ENCODE measurements at regions of chr7 and their contacts with region 1.

Region 1: DNA sequence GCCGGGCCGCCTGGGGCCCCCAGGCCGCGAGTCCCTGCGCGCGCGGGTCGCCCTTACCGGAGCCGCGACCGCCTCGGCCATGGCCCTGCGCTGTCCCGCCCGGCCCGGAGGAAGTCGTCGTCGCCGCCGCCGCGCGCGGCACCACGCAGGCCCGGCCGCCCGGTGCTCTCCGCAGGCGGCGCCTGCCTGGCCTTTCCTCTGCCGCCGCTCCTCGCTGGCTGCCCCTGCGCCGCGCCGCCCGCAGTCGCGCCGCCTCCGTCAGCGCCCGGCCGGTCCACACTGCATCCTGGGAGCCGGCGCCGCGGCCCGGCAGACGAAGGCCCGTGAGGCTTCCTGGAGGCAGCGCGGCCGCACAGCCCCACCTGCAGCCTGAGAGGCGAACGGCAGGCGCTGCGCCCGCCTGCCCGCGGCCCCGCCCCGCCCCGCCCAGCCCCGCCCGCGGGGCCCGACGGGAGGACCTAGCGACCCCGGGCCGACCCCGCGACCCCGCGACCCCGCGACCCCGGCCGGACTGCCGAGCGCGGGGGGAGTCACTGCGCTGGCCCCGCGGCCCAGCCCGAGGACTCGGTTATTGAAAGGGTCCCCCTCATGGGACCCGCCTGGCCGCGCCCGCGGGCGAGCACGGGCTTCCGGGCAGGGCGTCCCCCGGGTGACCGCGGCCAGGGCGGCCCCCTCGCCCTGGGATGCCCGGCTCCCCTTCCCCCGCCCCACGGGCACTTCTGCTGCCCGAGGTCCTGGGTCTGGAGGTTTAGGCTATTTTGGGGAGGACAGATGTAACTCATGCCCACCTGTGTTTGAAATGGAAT is at the start of gene ZNF746:
- DNase-seq: peak; percentile 96 to 97 (median 97)
- ATAC-seq: peak; percentile 91
- H3K4me3 ChIP-seq: peak within 1 kb of the TSS; percentile 78
- H3K27ac ChIP-seq: peak within 1 kb of the TSS; percentile 71
- H3K4me1 ChIP-seq: peaks cover 31 to 34% of the 10 kb centered on the region in 2 experiments
- H3K27me3 ChIP-seq: peaks cover 5 to 16% of the 10 kb centered on the region in 2 experiments; a peak in 3 of 5 replicates
- CTCF ChIP-seq: peak; percentile 57 to 97 (median 92); a peak in 5 of 6 replicates
- EP300 ChIP-seq: peak; percentile 42; the same call in 1 of the 2 replicates
- POLR2A ChIP-seq: no peak
- RAD21 ChIP-seq: peak; percentile 77 to 83
- polyA plus RNA-seq, gene ZNF746: 1.7 to 2.0 TPM

Region 2: DNA sequence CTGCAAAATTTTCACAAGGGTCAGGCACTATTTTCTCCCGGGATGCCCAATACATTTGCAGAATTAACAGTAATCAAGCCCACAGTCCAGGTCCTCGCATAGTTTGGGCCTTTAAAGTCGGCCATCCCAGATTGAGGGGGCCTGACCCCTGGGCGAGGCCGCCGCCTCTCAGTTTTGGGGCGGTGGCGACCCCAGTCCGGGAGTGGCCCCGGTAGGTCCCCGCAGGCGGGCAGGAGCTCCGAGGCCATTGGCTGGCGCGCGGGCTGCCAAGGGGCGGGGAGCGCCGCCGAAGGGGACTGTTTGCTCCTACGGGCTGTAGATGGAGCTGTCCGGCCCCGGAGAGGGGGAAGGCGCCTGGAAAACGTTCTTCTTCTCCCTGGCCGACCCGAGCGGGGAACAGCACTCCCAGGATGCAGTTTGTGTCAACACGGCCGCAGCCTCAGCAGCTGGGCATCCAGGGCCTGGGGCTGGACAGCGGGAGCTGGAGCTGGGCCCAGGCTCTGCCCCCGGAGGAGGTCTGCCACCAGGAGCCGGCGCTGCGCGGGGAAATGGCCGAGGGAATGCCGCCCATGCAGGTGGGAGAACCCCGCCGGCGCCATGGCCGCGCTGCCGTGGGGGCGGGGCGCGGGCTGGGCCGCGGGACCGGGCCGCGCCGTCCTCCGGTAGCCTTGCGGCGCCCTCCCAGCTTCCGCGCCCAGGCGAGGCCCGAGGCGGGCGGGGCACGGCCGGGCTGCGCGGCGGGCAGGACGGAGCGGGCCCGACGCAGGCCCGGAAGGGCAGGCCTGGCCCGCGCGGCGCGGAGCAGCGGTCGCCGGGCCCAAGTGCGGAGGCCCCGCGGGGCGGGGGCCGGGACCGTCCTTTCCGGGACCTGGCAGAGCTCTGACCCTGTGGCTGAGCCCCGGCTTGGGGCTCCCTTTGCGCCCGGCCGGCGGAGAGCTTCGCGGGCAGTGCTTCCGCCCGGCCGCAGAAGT is 302.2 kb before region 1 on chr7 and contains the start of gene ZNF282:
- CTCF ChIA-PET with region 1: no interaction called
- POLR2A ChIA-PET with region 1: no interaction called
- in situ Hi-C with region 1: no loop called
- intact Hi-C with region 1: loop called (anchors 5 kb)
- DNase-seq: peak; percentile 95 to 98 (median 98)
- ATAC-seq: peak; percentile 97
- H3K4me3 ChIP-seq: peak within 1 kb of the TSS; percentile 99
- H3K27ac ChIP-seq: peak within 1 kb of the TSS; percentile 88
- H3K4me1 ChIP-seq: peaks cover 14 to 31% of the 10 kb centered on the region in 2 experiments; a peak in 4 of 5 replicates
- H3K27me3 ChIP-seq: no peaks in the 10 kb centered on the region
- CTCF ChIP-seq: peak; percentile 89 to 95 (median 93)
- EP300 ChIP-seq: peak; percentile 17; the same call in 1 of the 2 replicates
- POLR2A ChIP-seq: peak; percentile 92
- RAD21 ChIP-seq: peak; percentile 69 to 71
- polyA plus RNA-seq, gene ZNF282: 0.76 to 1.3 TPM

Region 3: DNA sequence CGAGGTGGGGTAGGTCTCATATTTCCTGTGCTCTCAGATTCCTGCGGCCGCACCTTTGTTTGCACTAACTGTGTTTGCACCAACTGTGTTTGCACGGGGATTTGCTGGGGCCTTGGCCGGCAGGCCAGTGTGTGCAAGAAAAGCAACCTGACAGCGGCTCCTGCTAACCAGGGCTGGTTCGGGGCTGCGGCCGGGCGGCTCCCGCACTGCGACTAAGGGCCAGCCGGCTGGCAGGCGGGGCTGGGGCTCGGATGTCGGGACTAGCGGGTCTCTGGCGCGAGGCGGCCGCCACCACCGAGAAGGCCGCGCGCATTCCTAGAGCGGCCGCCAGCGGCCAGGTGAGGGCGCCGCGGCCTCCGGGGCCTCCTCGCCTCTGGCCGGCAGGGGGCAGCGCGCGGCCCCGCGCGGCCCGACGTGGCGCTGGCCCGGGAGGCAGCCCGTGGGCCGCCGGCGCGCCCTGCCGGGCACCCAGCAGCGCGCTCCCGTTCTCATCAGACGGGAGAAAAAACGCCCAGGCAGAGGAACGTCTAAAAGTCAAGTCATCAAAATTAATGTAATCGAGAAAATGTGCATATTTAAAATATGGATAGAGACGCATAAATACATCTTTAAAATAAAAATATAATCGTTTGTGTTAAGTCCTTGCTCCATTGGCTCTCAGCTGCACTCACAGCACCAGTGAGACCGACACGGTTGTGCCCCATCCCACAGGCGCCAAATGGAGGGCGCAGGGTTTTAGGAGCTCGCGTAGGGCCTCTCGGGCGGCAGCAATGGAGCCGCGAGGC is 75.3 kb before region 1 on chr7:
- CTCF ChIA-PET with region 1: interaction called, 7 read pairs
- POLR2A ChIA-PET with region 1: interaction called, 5 read pairs
- in situ Hi-C with region 1: no loop called
- intact Hi-C with region 1: loop called (anchors 2 kb)
- DNase-seq: peak; percentile 90 to 98 (median 98)
- ATAC-seq: peak; percentile 98
- H3K4me3 ChIP-seq: peak overlapping the region; percentile 50
- H3K27ac ChIP-seq: peak overlapping the region; percentile 47; the same call in 1 of the 3 replicates
- H3K4me1 ChIP-seq: peaks cover 3 to 26% of the 10 kb centered on the region in 2 experiments; a peak in 3 of 5 replicates
- H3K27me3 ChIP-seq: no peaks in the 10 kb centered on the region
- CTCF ChIP-seq: peak; percentile 65 to 99 (median 98)
- EP300 ChIP-seq: no peak; the same call in none of the 2 replicates
- POLR2A ChIP-seq: peak; percentile 85
- RAD21 ChIP-seq: peak; percentile 57 to 97; a peak in 3 of 4 replicates

Region 4: GRCh38 chr7:149474309-149475114 is 23.1 kb before region 1 on chr7:
- CTCF ChIA-PET with region 1: no interaction called
- POLR2A ChIA-PET with region 1: interaction called, 10 read pairs
- in situ Hi-C with region 1: no loop called
- intact Hi-C with region 1: no loop called
- DNase-seq: no peak
- ATAC-seq: no peak
- H3K4me3 ChIP-seq: no peak overlapping the region
- H3K27ac ChIP-seq: no peak overlapping the region
- H3K4me1 ChIP-seq: no peaks in the 10 kb centered on the region; a peak in 1 of 5 replicates
- H3K27me3 ChIP-seq: no peaks in the 10 kb centered on the region
- CTCF ChIP-seq: 0 out of 6 replicates have a peak, but pooled peaks of 2 of the 3 experiments have one; percentile 16 to 19
- EP300 ChIP-seq: no peak
- POLR2A ChIP-seq: no peak
- RAD21 ChIP-seq: no peak

Region 5: GRCh38 chr7:149598721-149599306 is 101.2 kb after region 1 on chr7:
- CTCF ChIA-PET with region 1: no interaction called
- POLR2A ChIA-PET with region 1: no interaction called
- in situ Hi-C with region 1: no loop called
- intact Hi-C with region 1: loop called (anchors 5 kb)
- DNase-seq: peak; percentile 44 to 56 (median 52)
- ATAC-seq: peak; percentile 90
- H3K4me3 ChIP-seq: no peak overlapping the region
- H3K27ac ChIP-seq: no peak overlapping the region
- H3K4me1 ChIP-seq: no peaks in the 10 kb centered on the region
- H3K27me3 ChIP-seq: no peaks in the 10 kb centered on the region
- CTCF ChIP-seq: peak; percentile 58 to 65 (median 63)
- EP300 ChIP-seq: no peak
- POLR2A ChIP-seq: no peak
- RAD21 ChIP-seq: peak in 1 of 2 experiments; percentile 52; a peak in 2 of 4 replicates

Measured in K562 (cell line).